MCF 10A (cell line): ENCODE measurements at regions of chrX and their contacts with region 1.

Region 1: GRCh38 chrX:32673193-32673592 is 538.2 kb downstream of the DMD start:
- DNase-seq: peak; percentile 28
- H3K4me3 Mint-ChIP-seq: no peak overlapping the region
- H3K27ac Mint-ChIP-seq: no peak overlapping the region
- H3K4me1 Mint-ChIP-seq: peaks cover 9% of the 10 kb centered on the region
- H3K27me3 Mint-ChIP-seq: peaks cover 27% of the 10 kb centered on the region
- CTCF ChIP-seq: peak; percentile 34

Region 2: GRCh38 chrX:32408389-32408788 is 264.8 kb before region 1 on chrX:
- CTCF ChIA-PET with region 1: no interaction called
- POLR2A ChIA-PET with region 1: no interaction called
- intact Hi-C with region 1: loop called (anchors 1 kb)
- DNase-seq: peak; percentile 35
- H3K4me3 Mint-ChIP-seq: no peak overlapping the region
- H3K27ac Mint-ChIP-seq: no peak overlapping the region
- H3K4me1 Mint-ChIP-seq: no peaks in the 10 kb centered on the region
- H3K27me3 Mint-ChIP-seq: peaks cover 23% of the 10 kb centered on the region
- CTCF ChIP-seq: peak; percentile 45

Region 3: DNA sequence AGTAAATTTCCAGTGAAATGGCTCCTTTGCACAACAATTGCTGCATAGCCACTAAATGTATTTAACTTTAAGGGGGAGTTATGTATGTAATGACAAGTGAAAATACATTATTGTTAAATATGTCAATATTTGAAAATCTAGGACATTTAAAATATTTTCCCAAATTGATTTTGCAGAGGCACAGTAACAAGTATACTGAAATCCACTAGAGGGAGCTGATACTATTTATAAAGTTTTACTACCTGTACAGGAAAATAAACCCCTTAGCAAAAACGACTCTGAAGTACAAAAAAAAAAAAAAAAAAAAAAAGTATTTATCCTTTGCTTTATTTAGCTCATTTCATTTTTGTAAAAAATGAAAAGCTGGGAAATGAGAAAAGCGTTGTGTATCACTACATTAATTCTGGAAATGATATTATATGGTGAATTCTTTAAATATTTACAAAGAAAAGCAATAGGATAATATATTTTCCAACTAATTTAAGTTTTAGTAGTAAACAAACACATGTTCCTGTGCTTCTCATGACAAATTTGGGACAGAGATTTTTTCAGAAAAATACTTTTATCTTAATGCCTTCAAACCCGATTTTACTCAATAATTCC is 189.6 kb before region 1 on chrX:
- CTCF ChIA-PET with region 1: no interaction called
- POLR2A ChIA-PET with region 1: no interaction called
- intact Hi-C with region 1: loop called (anchors 1 kb)
- DNase-seq: no peak
- H3K4me3 Mint-ChIP-seq: no peak overlapping the region
- H3K27ac Mint-ChIP-seq: no peak overlapping the region
- H3K4me1 Mint-ChIP-seq: no peaks in the 10 kb centered on the region
- H3K27me3 Mint-ChIP-seq: peaks cover 27% of the 10 kb centered on the region
- CTCF ChIP-seq: peak; percentile 33

Region 4: DNA sequence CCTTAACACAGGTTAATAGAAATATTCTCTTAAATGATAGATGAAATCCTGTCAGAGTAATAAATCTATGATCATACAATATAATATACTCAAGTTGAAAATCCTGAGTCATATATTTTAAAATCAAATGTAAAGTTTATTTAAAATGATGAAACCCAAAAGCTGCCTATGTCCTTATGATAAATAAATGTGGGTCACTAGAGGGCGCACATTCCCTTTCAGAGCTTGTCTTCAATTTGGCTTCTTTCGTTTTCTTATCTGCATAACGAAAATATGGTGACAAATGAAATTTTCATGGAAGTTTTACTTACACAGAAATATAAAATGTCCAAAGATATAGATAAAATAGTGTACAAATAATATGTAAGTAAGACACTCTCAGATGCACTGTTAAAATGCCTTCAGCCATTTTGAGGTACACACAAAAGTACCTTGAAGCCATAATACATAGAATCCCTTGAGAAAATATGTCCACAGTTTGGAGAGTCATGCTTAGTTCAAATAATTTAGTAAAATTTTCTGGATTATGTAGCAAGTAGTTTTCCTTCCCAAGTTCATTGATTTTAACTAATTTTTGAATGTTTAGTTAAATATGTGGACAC is 142.3 kb before region 1 on chrX:
- CTCF ChIA-PET with region 1: no interaction called
- POLR2A ChIA-PET with region 1: no interaction called
- intact Hi-C with region 1: loop called (anchors 1 kb)
- DNase-seq: peak; percentile 66
- H3K4me3 Mint-ChIP-seq: peak overlapping the region; percentile 25
- H3K27ac Mint-ChIP-seq: no peak overlapping the region
- H3K4me1 Mint-ChIP-seq: no peaks in the 10 kb centered on the region
- H3K27me3 Mint-ChIP-seq: peaks cover 14% of the 10 kb centered on the region
- CTCF ChIP-seq: peak; percentile 52

Region 5: DNA sequence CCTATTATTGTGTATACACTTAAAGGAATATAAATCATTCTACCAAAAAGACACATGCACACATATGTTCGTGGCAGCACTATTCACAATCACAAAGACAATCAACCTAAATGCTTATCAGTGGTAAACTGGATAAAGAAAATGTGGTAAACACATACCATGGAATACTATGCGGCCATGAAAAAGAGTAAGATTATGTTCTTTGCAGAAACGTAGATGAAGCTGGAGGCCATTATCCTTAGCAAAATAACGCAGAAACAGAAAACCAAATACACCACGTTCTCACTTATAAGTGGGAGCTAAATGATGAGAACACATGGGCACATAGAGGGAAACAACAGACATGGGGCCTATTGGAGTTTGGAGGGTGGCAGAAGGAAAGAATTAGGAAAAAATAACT is 55.0 kb before region 1 on chrX:
- CTCF ChIA-PET with region 1: no interaction called
- POLR2A ChIA-PET with region 1: no interaction called
- intact Hi-C with region 1: no loop called
- DNase-seq: no peak
- H3K4me3 Mint-ChIP-seq: no peak overlapping the region
- H3K27ac Mint-ChIP-seq: no peak overlapping the region
- H3K4me1 Mint-ChIP-seq: no peaks in the 10 kb centered on the region
- H3K27me3 Mint-ChIP-seq: peaks cover 8% of the 10 kb centered on the region
- CTCF ChIP-seq: no peak